PC-3 (cell line): ENCODE measurements at regions of chr3 and their contacts with region 1.

Region 1: GRCh38 chr3:111859974-111860859 is 1.2 kb downstream of the PHLDB2 start:
- DNase-seq: peak; percentile 96
- ATAC-seq: peak; percentile 68
- H3K4me3 ChIP-seq: peak overlapping the region; percentile 72
- H3K27ac ChIP-seq: peak overlapping the region; percentile 94
- H3K4me1 ChIP-seq: peaks cover 46% of the 10 kb centered on the region
- H3K27me3 ChIP-seq: no peaks in the 10 kb centered on the region
- CTCF ChIP-seq: peak; percentile 71

Region 2: DNA sequence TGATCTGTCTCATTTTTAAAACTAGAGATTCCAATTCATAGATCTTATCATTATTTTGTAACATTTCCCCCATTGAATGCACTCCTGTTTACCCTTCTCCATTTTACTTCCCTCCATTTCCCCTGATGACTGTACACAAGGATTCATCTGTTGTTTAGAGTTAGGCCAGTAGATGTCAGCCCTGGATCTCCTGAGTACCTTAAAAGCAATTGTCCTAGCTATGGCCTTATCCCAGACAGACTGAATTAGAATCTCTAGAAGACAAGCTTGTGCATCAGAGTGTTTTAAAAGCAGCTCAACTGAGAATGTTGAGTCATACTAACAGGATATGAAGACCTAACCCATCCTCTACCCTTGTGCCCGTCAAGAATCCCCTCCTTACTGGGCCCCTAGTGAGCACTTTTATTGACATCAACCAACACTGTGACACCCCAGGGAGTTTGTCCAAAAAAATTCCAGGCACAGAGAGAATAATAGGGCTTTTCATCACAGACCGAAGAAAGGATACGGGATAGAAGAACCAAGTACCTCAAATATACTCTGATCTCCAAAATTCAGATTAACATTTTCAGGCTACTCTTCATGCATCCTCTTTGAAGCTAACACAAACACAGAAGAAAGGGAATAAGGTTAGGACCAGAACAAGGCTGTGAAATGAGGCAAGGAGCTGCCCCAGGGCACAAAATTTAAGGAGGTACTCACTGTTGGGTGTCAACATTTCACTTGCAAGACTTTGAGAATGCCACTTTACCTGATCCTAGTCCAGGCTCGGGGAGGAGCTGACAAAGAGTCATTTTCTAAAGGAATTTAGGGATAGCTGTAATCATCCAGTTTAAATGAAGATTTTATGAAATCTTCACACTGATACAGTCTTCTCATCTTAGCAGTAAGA is 282.2 kb before region 1 on chr3:
- CTCF ChIA-PET with region 1: interaction called, 5 read pairs
- POLR2A ChIA-PET with region 1: no interaction called
- intact Hi-C with region 1: loop called (anchors 5 kb)
- DNase-seq: peak; percentile 93
- ATAC-seq: peak; percentile 83
- H3K4me3 ChIP-seq: no peak overlapping the region
- H3K27ac ChIP-seq: no peak overlapping the region
- H3K4me1 ChIP-seq: peaks cover 45% of the 10 kb centered on the region
- H3K27me3 ChIP-seq: no peaks in the 10 kb centered on the region
- CTCF ChIP-seq: peak; percentile 95

Region 3: GRCh38 chr3:111676211-111677006 is 183.8 kb before region 1 on chr3:
- CTCF ChIA-PET with region 1: no interaction called
- POLR2A ChIA-PET with region 1: no interaction called
- intact Hi-C with region 1: loop called (anchors 2 kb)
- DNase-seq: peak; percentile 99
- ATAC-seq: peak; percentile 76
- H3K4me3 ChIP-seq: peak overlapping the region; percentile 87
- H3K27ac ChIP-seq: peak overlapping the region; percentile 86
- H3K4me1 ChIP-seq: peaks cover 53% of the 10 kb centered on the region
- H3K27me3 ChIP-seq: no peaks in the 10 kb centered on the region
- CTCF ChIP-seq: no peak

Region 4: DNA sequence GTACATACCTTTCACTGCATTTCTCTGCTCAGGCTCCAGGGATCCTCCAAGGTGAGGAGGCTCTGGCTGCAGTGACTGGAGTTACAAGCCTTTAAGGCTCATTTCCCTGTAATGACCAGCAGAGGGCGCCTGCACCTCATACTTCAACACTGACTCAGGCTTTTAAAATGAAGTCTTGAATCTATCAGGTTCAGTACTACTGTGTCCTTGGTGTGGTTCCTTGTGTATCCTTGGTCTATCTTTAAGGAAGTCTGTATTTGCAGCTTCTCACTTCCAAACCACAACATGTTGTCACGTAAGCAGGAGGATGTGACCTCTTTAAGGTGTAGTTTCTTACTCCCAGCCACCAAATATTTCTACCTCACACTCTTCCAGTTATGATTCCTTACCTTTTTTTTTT is 142.6 kb before region 1 on chr3:
- CTCF ChIA-PET with region 1: interaction called, 76 read pairs
- POLR2A ChIA-PET with region 1: interaction called, 5 read pairs
- intact Hi-C with region 1: loop called (anchors 1 kb)
- DNase-seq: peak; percentile 97
- ATAC-seq: peak; percentile 88
- H3K4me3 ChIP-seq: no peak overlapping the region
- H3K27ac ChIP-seq: peak overlapping the region; percentile 25
- H3K4me1 ChIP-seq: peaks cover 35% of the 10 kb centered on the region
- H3K27me3 ChIP-seq: no peaks in the 10 kb centered on the region
- CTCF ChIP-seq: peak; percentile 98

Region 5: GRCh38 chr3:111747490-111747889 is 112.7 kb before region 1 on chr3:
- CTCF ChIA-PET with region 1: interaction called, 14 read pairs
- POLR2A ChIA-PET with region 1: no interaction called
- intact Hi-C with region 1: no loop called
- DNase-seq: peak; percentile 94
- ATAC-seq: peak; percentile 95
- H3K4me3 ChIP-seq: no peak overlapping the region
- H3K27ac ChIP-seq: peak overlapping the region; percentile 92
- H3K4me1 ChIP-seq: peaks cover 62% of the 10 kb centered on the region
- H3K27me3 ChIP-seq: no peaks in the 10 kb centered on the region
- CTCF ChIP-seq: no peak

Region 6: GRCh38 chr3:111895079-111895478 is 34.9 kb after region 1 on chr3:
- CTCF ChIA-PET with region 1: interaction called, 3 read pairs
- POLR2A ChIA-PET with region 1: no interaction called
- intact Hi-C with region 1: loop called (anchors 1 kb)
- DNase-seq: peak; percentile 80
- ATAC-seq: peak; percentile 79
- H3K4me3 ChIP-seq: no peak overlapping the region
- H3K27ac ChIP-seq: no peak overlapping the region
- H3K4me1 ChIP-seq: peaks cover 25% of the 10 kb centered on the region
- H3K27me3 ChIP-seq: no peaks in the 10 kb centered on the region
- CTCF ChIP-seq: peak; percentile 79